HEK293 (cell line): ENCODE measurements at regions of chr6 and their contacts with region 1.

Region 1: DNA sequence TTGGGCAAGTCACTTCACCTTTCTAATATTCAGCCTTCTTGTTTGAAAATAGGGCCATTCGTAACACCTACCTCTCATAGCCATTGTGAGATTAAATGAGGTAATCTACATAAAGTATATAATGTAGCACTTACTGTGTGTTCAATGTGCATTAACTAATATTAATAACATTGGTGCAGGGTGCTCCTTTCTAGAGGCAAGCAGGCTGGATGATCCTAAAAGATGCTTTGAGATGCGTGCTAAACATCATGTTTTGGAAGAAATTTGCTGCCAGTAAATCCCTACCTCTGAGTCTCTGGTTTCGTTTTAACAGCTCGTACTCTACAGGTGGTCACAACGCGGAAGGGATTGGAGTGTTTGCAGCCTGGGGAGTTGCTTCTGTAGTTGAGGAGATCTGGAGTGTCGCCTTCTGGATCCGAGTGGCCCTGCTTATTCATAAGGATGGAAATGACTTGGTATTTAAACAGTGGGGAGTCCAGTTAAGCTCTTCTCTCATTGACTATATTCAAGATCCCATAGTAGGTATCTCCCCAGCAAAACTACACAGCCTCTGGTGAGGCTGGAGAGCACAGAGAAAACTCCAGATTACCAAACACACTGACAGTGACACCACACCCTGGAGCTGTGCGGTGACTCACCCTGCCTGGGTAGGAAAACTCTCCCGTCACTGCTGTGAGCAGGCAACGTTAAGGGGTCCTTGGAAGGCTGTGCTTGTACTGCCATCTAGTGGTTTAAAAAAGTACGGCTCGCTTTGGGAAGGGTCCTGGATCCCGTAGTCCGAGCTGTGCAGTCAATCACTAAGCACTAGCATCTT is 107.9 kb downstream of the MAP3K7 start:
- H3K4me3 ChIP-seq: no peak overlapping the region
- H3K27ac ChIP-seq: no peak overlapping the region
- H3K4me1 ChIP-seq: no peaks in the 10 kb centered on the region
- CTCF ChIP-seq: peak; percentile 88

Region 2: GRCh38 chr6:89952686-89953085 is 526.3 kb before region 1 on chr6:
- CTCF ChIA-PET with region 1: interaction called, 15 read pairs
- POLR2A ChIA-PET with region 1: no interaction called
- H3K4me3 ChIP-seq: no peak overlapping the region
- H3K27ac ChIP-seq: no peak overlapping the region
- H3K4me1 ChIP-seq: no peaks in the 10 kb centered on the region
- CTCF ChIP-seq: no peak

Region 3: DNA sequence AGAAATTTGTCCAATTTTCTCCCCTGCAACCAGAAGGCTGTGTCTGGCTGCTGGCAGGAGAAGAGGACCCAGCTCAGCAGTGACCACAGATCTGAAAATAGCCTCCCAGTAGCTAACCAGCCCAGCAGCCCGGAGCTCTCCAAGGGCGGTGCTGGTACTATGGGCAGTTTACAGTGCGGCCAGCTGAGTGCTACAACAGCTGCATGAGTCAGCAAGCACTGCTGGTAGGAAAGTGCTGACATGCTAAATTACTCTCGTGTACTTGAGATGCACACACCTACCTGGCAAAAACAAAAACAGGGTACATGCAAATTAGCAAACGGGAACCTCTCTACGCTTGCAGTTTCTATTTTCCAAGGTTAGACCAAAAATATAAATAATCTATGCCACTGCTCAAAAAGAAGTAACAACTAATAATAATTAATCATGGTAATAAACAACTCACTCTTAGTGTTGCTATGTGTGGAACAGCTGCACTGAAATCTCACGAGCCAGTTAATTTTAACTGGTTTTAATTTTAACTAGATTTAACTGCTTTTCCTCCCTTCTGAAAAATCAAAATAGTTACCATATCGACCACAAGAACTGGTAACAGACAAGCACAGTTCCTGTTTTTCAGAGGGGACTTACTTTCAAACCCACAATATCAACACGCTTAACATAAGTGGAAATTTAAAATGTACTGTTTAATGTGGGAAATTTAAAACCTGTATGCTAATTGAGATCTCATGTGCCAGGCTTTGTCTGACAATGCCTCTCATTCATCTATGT is 193.2 kb before region 1 on chr6:
- CTCF ChIA-PET with region 1: interaction called, 121 read pairs
- POLR2A ChIA-PET with region 1: interaction called, 4 read pairs
- H3K4me3 ChIP-seq: 0 out of 2 replicates have a peak overlapping the region, but pooled peaks have one; percentile 2
- H3K27ac ChIP-seq: no peak overlapping the region
- H3K4me1 ChIP-seq: peaks cover 6% of the 10 kb centered on the region
- CTCF ChIP-seq: no peak

Region 4: GRCh38 chr6:90434094-90434493 is 44.9 kb before region 1 on chr6:
- CTCF ChIA-PET with region 1: interaction called, 10 read pairs
- POLR2A ChIA-PET with region 1: no interaction called
- H3K4me3 ChIP-seq: no peak overlapping the region
- H3K27ac ChIP-seq: no peak overlapping the region
- H3K4me1 ChIP-seq: no peaks in the 10 kb centered on the region
- CTCF ChIP-seq: no peak

Region 5: GRCh38 chr6:90454836-90455427 is 24.1 kb before region 1 on chr6:
- CTCF ChIA-PET with region 1: interaction called, 23 read pairs
- POLR2A ChIA-PET with region 1: no interaction called
- H3K4me3 ChIP-seq: no peak overlapping the region
- H3K27ac ChIP-seq: no peak overlapping the region
- H3K4me1 ChIP-seq: no peaks in the 10 kb centered on the region
- CTCF ChIP-seq: no peak

Region 6: GRCh38 chr6:90466154-90466940 is 12.6 kb before region 1 on chr6:
- CTCF ChIA-PET with region 1: interaction called, 13 read pairs
- POLR2A ChIA-PET with region 1: no interaction called
- H3K4me3 ChIP-seq: no peak overlapping the region
- H3K27ac ChIP-seq: no peak overlapping the region
- H3K4me1 ChIP-seq: no peaks in the 10 kb centered on the region
- CTCF ChIP-seq: no peak

Region 7: DNA sequence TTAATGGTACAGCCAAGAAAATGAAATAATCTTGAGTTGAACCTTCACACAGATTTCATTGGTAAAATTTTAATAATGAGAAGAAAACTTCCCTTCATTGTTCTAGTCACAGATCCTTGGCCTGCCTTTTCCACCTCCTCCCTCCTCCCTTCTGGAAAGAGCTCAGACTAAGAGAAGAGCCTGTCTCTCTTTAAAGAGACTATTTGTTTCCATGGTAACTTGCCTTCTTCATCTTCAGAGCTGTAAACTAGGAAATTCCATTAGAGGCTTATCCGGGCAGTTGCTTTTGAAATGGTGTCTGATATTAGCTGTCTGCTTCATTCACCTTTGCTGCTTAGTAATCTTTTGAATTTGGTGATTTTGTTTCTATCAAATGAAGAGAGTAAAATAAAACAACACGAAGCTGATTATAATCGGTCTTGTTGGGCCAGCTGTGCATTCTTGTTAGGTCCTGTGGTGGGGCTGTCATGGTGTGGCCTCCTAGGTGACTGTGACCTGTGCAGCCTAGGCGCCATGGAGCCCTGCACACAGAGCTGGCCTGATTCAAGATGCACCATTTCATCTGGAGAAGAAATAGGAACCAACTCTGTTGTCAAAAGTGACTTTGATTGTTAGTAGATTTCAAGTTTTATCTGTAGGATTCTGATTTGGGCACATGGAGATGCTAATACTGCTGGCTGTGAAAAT is 11.2 kb after region 1 on chr6:
- CTCF ChIA-PET with region 1: interaction called, 17 read pairs
- POLR2A ChIA-PET with region 1: no interaction called
- H3K4me3 ChIP-seq: no peak overlapping the region
- H3K27ac ChIP-seq: no peak overlapping the region
- H3K4me1 ChIP-seq: no peaks in the 10 kb centered on the region
- CTCF ChIP-seq: no peak

Region 8: GRCh38 chr6:90516074-90516660 is 37.2 kb after region 1 on chr6:
- CTCF ChIA-PET with region 1: no interaction called
- POLR2A ChIA-PET with region 1: no interaction called
- H3K4me3 ChIP-seq: no peak overlapping the region
- H3K27ac ChIP-seq: no peak overlapping the region
- H3K4me1 ChIP-seq: no peaks in the 10 kb centered on the region
- CTCF ChIP-seq: no peak

Region 9: DNA sequence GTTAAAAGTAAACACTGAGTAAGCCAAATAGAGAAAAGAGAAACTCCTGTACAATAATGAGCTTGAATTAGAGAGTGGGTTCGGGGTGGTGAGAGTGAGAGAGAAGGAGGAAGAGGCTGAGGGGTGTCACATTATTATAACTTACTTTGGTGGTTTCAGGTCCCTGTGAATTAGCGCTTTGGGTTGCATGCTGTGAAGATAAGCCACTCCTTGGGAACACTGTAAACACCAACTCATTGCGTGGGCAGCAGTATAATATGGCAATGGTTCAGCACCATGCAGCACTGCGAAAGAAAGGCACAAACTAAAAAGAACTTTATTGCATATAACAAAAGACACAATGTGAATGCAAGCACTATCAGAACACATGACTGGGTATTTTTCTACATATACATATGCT is 80.9 kb after region 1 on chr6:
- CTCF ChIA-PET with region 1: no interaction called
- POLR2A ChIA-PET with region 1: no interaction called
- H3K4me3 ChIP-seq: no peak overlapping the region
- H3K27ac ChIP-seq: no peak overlapping the region
- H3K4me1 ChIP-seq: no peaks in the 10 kb centered on the region
- CTCF ChIP-seq: no peak

Region 10: GRCh38 chr6:90621581-90621980 is 142.6 kb after region 1 on chr6:
- CTCF ChIA-PET with region 1: no interaction called
- POLR2A ChIA-PET with region 1: no interaction called
- H3K4me3 ChIP-seq: no peak overlapping the region
- H3K27ac ChIP-seq: no peak overlapping the region
- H3K4me1 ChIP-seq: peaks cover 14% of the 10 kb centered on the region; the same call in 1 of the 2 replicates
- CTCF ChIP-seq: no peak

Region 11: GRCh38 chr6:92231220-92231701 is 1752.3 kb after region 1 on chr6:
- CTCF ChIA-PET with region 1: no interaction called
- POLR2A ChIA-PET with region 1: no interaction called
- H3K4me3 ChIP-seq: no peak overlapping the region
- H3K27ac ChIP-seq: no peak overlapping the region
- H3K4me1 ChIP-seq: no peaks in the 10 kb centered on the region
- CTCF ChIP-seq: no peak